A549 (cell line): ENCODE measurements at regions of chr17 and their contacts with region 1.

Region 1: GRCh38 chr17:30336369-30337171 is 2.7 kb upstream of the TMIGD1 start:
- DNase-seq: peak; percentile 66 to 88
- ATAC-seq: peak; percentile 78 to 82
- H3K4me3 ChIP-seq: no peak overlapping the region
- H3K27ac ChIP-seq: peak overlapping the region; percentile 3 to 36; a peak in 3 of 6 replicates
- H3K4me1 ChIP-seq: peaks cover 38% of the 10 kb centered on the region
- CTCF ChIP-seq: peak; percentile 99
- EP300 ChIP-seq: no peak
- POLR2A ChIP-seq: no peak
- RAD21 ChIP-seq: peak; percentile 87 to 94

Region 2: GRCh38 chr17:30134551-30134950 is 202.0 kb before region 1 on chr17:
- CTCF ChIA-PET with region 1: interaction called, 61 read pairs
- POLR2A ChIA-PET with region 1: no interaction called
- DNase-seq: no peak
- ATAC-seq: no peak
- H3K4me3 ChIP-seq: no peak overlapping the region
- H3K27ac ChIP-seq: no peak overlapping the region
- H3K4me1 ChIP-seq: 0 out of 3 replicates have a peak, but pooled peaks cover 4% of the 10 kb centered on the region
- CTCF ChIP-seq: no peak
- EP300 ChIP-seq: no peak
- POLR2A ChIP-seq: no peak
- RAD21 ChIP-seq: no peak

Region 3: GRCh38 chr17:30278032-30278431 is 58.5 kb before region 1 on chr17:
- CTCF ChIA-PET with region 1: interaction called, 11 read pairs
- POLR2A ChIA-PET with region 1: no interaction called
- DNase-seq: peak; percentile 31 to 65
- ATAC-seq: peak; percentile 84 to 85
- H3K4me3 ChIP-seq: no peak overlapping the region
- H3K27ac ChIP-seq: no peak overlapping the region
- H3K4me1 ChIP-seq: no peaks in the 10 kb centered on the region
- CTCF ChIP-seq: peak; percentile 56
- EP300 ChIP-seq: no peak
- POLR2A ChIP-seq: no peak
- RAD21 ChIP-seq: peak; percentile 64 to 67

Region 4: GRCh38 chr17:30299000-30299399 is 37.6 kb before region 1 on chr17:
- CTCF ChIA-PET with region 1: interaction called, 46 read pairs
- POLR2A ChIA-PET with region 1: no interaction called
- DNase-seq: peak in 1 of 2 experiments; percentile 34
- ATAC-seq: 0 out of 6 replicates have a peak, but pooled peaks of 1 of the 2 experiments have one; percentile 29
- H3K4me3 ChIP-seq: no peak overlapping the region
- H3K27ac ChIP-seq: no peak overlapping the region
- H3K4me1 ChIP-seq: no peaks in the 10 kb centered on the region
- CTCF ChIP-seq: peak; percentile 67
- EP300 ChIP-seq: no peak
- POLR2A ChIP-seq: no peak
- RAD21 ChIP-seq: peak; percentile 44 to 62

Region 5: GRCh38 chr17:30323895-30324319 is 12.7 kb before region 1 on chr17:
- CTCF ChIA-PET with region 1: interaction called, 59 read pairs
- POLR2A ChIA-PET with region 1: no interaction called
- DNase-seq: peak in 1 of 2 experiments; percentile 43
- ATAC-seq: peak; percentile 49 to 68
- H3K4me3 ChIP-seq: no peak overlapping the region
- H3K27ac ChIP-seq: peak overlapping the region; percentile 33 to 48; a peak in 4 of 6 replicates
- H3K4me1 ChIP-seq: peaks cover 30% of the 10 kb centered on the region
- CTCF ChIP-seq: no peak
- EP300 ChIP-seq: no peak
- POLR2A ChIP-seq: no peak
- RAD21 ChIP-seq: no peak

Region 6: DNA sequence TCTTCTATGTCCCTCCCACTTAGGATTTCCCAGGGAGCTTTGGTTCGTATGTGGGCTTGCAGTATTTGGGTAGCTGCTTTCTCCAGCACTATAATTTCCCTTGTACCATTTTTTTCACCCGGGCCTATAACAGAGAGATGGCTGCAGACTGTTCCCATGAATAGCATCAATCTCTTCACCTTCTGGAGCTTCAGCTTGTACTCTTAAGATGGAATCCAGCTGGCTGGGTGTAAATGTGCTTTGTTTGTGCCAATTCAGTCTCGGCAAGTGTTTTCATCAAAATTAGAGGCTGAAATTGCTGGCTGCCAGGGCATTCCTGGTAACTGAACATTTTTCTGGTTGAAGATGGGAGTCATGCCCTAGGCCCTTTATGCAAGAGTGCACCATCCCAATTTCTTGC is 30.0 kb after region 1 on chr17:
- CTCF ChIA-PET with region 1: interaction called, 13 read pairs
- POLR2A ChIA-PET with region 1: no interaction called
- DNase-seq: no peak
- ATAC-seq: no peak
- H3K4me3 ChIP-seq: no peak overlapping the region
- H3K27ac ChIP-seq: no peak overlapping the region
- H3K4me1 ChIP-seq: peaks cover 28% of the 10 kb centered on the region
- CTCF ChIP-seq: no peak
- EP300 ChIP-seq: no peak
- POLR2A ChIP-seq: no peak
- RAD21 ChIP-seq: no peak

Region 7: DNA sequence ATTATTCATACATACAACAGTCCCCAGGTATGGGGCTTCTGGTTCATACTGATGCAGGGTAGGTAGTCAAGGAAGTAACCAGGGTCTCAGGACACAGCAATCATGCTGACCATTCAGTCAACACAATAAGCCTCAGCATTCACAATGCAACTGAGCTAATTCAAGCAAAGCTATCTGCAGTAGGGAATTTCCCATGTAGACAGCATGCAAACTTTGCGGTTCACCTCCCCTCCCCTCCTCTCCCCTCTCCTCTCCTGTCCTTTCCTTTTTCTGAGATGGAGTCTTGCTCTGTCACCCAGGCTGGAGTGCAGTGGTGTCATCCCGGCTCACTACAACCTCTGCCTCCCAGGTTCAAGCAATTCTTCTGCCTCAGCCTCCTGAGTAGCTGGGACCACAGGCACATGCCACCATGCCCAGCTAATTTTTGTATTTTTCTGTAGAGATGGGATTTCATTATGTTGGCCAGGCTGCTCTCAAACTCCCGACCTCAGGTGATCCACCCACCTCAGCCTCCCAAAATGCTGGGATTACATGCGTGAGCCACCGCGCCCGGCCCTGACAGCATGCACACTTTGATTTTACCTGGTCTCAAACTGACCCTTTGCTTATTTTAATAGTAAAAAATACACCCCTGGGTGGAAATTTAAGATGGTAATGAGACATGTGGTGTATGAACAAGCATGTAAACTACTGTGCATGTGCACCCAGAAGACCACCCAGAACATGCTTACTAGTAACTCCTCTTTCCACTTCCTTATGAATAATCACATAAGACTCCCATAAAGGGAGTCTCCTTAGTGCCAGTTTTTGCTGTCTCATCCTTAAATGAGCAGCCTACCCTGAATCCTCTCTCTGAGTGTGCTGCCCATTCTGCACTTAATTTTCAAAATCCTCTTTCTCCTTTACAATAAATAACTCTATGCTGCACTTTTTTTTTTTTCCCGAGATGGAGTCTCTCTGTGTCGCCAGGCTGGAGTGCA is 624.9 kb after region 1 on chr17:
- CTCF ChIA-PET with region 1: no interaction called
- POLR2A ChIA-PET with region 1: no interaction called
- DNase-seq: peak in 1 of 2 experiments; percentile 55
- ATAC-seq: peak; percentile 63 to 79; a peak in 4 of 6 replicates
- H3K4me3 ChIP-seq: no peak overlapping the region
- H3K27ac ChIP-seq: peak overlapping the region; percentile 28 to 75
- H3K4me1 ChIP-seq: peaks cover 17% of the 10 kb centered on the region
- CTCF ChIP-seq: no peak
- EP300 ChIP-seq: no peak
- POLR2A ChIP-seq: no peak
- RAD21 ChIP-seq: no peak